ENCODE measurements at regions of chr11 and their contacts with region 1.

Region 1: DNA sequence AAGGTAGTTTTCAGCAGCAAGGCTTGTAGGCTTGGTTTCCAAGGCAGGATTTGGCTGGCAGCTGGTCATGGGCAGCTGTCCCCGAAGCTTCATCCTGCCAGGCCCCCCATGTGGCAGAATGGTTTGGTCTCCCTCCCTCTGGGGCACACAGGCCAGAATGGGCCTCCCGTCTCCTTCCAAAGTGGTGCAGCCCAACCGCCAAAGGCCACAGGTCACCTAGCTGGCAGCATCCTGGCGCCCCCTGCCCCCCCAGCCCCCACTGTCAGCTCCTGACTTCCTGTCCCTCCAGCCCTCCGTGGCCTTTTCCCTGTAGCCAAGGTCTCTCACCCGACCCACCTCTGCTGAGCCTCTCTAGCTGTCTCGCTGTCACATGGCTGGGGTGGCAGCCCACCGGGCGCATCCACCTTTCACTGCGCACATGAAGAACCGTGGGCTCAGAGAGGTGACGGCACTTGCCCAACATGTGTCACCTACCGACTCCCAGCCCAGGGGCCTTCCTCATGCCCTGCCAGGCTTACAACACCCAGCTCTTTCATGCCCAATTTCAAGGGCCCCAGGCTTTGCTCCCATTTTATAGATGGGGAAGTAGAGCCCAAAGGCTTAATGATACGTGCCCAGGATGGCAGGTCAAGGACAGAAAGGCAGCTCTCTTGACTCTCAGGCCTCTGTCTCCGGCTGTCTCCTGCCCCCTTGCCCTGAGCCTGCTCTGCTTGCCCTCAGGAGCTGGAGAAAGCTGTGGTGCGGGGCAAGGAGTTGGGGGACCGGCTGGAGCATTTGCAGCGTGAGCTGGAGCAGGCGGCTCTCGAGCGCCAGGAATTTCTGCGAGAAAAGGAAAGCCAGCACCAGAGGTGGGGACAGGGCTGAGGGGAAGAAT is 8.8 kb downstream of the CCDC88B start:
- DNase-seq: no peak
- H3K4me3 Mint-ChIP-seq: no peak overlapping the region
- H3K27ac Mint-ChIP-seq: no peak overlapping the region
- H3K4me1 Mint-ChIP-seq: peaks cover 8% of the 10 kb centered on the region
- H3K27me3 Mint-ChIP-seq: no peaks in the 10 kb centered on the region

Region 2: DNA sequence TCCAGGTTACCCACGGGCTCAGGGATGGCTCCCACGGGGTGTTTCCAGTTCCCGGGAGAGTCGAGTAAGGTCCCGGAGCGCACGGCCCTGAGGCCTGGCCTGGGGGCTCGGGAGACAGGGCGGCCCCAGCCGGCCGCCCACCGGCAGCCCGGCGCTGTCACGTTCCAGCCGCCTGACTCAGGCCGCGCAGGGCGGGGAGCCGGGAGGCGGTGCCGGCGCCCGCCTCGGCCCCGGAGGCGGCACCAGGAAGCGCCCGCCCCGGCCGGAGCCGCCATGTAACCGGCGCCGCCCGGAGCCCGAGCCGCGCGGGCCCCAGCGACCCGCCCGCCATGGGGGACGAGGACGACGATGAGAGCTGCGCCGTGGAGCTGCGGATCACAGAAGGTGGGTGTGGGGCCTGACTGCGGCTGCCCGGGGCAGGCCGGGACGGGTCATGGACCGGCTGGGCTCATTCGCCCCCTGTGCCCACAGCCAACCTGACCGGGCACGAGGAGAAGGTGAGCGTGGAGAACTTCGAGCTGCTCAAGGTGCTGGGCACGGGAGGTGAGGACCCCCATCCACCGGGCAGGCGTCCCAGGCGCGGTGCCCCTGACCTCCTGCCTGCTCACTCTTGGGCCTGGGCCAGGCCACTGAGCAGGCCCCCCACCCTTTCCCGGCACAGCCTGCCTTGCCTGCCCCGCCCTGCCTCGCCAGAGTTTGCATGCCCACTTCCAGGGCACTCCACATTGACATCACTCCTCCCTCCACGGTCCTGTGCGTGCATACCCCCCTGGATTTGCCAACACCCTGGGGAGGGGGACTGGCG is 10.3 kb after region 1 on chr11 and contains the start of gene RPS6KA4:
- CTCF ChIA-PET with region 1: interaction called, 17 read pairs
- POLR2A ChIA-PET with region 1: no interaction called
- DNase-seq: peak; percentile 50
- H3K4me3 Mint-ChIP-seq: peak within 1 kb of the TSS; percentile 97
- H3K27ac Mint-ChIP-seq: peak within 1 kb of the TSS; percentile 87
- H3K4me1 Mint-ChIP-seq: peaks cover 48% of the 10 kb centered on the region
- H3K27me3 Mint-ChIP-seq: no peaks in the 10 kb centered on the region
- total RNA-seq, gene RPS6KA4: 31.0 to 43.0 TPM

Region 3: GRCh38 chr11:64409707-64410403 is 61.0 kb after region 1 on chr11:
- CTCF ChIA-PET with region 1: no interaction called
- POLR2A ChIA-PET with region 1: no interaction called
- DNase-seq: no peak
- H3K4me3 Mint-ChIP-seq: no peak overlapping the region
- H3K27ac Mint-ChIP-seq: no peak overlapping the region
- H3K4me1 Mint-ChIP-seq: no peaks in the 10 kb centered on the region
- H3K27me3 Mint-ChIP-seq: no peaks in the 10 kb centered on the region

Measured in activated CD4-positive, alpha-beta T cell treated with anti-CD3 and anti-CD28 coated beads, Interleukin-2, amount 10 ng/mL, durations not matched to agents 7 days and 5 days (primary cell).